ENCODE measurements at regions of chr16 and their contacts with region 1.

Region 1: GRCh38 chr16:87316923-87317749 is at the start of gene C16orf95:
- DNase-seq: peak; percentile 98
- total RNA-seq, gene C16orf95: 3.2 TPM

Region 2: GRCh38 chr16:86901491-86902260 is 415.5 kb before region 1 on chr16:
- intact Hi-C with region 1: no loop called
- DNase-seq: no peak

Region 3: DNA sequence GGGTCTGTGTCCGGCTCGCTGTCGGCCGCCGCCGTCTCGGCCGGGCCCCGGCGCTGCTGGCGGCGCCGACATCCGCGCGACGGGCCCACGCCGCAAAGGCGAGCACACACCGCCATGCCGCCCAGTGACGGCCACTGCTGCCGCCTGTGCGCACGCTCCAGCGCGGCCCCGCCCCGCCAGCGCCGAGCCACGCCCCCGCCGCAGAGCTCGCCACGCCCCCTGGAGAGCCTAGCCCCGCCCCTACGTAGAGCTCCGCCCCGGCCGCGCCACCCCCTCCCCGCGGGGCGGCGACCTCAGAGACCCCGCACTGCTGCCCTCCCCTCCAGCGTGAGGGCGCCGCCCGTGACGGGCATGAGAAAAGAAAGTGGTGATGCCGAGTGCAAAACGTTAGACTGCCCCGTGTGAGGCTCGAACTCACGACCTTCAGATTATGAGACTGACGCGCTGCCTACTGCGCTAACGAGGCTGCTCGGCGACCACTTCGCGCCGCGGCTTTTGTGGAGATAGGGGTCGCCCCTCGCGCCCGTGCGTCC is 66.6 kb after region 1 on chr16 and contains the start of gene FBXO31:
- intact Hi-C with region 1: loop called (anchors 2 kb)
- DNase-seq: peak; percentile 96
- total RNA-seq, gene FBXO31: 73.9 TPM